Activated CD4-positive, alpha-beta memory T cell treated with anti-CD3 and anti-CD28 coated beads, Interleukin-2, amount 10 ng/mL, durations not matched to agents 7 days and 5 days (primary cell): ENCODE measurements at regions of chr1 and their contacts with region 1.

Region 1: GRCh38 chr1:151993654-151994496 is at the start of gene S100A10:
- DNase-seq: peak; percentile 86
- H3K4me3 Mint-ChIP-seq: peak within 1 kb of the TSS; percentile 91
- H3K27ac Mint-ChIP-seq: peak within 1 kb of the TSS; percentile 98
- H3K4me1 Mint-ChIP-seq: peaks cover 53% of the 10 kb centered on the region
- H3K27me3 Mint-ChIP-seq: no peaks in the 10 kb centered on the region
- total RNA-seq, gene S100A10: 631 to 641 TPM

Region 2: DNA sequence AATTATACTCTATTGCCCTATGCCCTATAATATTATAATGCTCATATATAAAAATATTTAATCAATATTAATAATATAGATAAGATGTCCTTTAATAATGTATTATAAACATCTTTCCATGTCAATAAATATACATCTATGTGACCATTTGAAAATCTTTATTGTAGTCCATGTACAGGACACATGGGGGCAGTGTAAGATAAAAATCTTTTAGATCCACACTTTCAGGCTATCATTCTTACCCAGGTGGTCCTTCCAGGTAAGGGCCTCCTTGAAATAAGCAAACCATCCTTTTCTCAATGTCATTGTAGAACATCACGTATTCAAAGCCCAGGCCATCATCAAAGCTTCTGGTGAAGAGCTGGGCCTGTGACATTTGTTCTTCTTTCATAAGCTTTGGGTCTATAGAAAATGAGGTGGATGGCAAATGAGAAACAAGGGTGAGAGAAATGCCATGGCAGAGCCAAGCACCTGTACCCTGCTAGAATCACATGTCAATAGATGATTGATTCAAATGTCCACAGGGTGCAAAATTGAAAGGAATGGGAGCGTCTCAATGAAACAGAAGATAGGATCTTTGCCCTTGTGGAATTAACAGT is 104.8 kb before region 1 on chr1:
- CTCF ChIA-PET with region 1: interaction called, 58 read pairs
- POLR2A ChIA-PET with region 1: no interaction called
- DNase-seq: no peak
- H3K4me3 Mint-ChIP-seq: no peak overlapping the region
- H3K27ac Mint-ChIP-seq: no peak overlapping the region
- H3K4me1 Mint-ChIP-seq: peaks cover 27% of the 10 kb centered on the region
- H3K27me3 Mint-ChIP-seq: no peaks in the 10 kb centered on the region

Region 3: DNA sequence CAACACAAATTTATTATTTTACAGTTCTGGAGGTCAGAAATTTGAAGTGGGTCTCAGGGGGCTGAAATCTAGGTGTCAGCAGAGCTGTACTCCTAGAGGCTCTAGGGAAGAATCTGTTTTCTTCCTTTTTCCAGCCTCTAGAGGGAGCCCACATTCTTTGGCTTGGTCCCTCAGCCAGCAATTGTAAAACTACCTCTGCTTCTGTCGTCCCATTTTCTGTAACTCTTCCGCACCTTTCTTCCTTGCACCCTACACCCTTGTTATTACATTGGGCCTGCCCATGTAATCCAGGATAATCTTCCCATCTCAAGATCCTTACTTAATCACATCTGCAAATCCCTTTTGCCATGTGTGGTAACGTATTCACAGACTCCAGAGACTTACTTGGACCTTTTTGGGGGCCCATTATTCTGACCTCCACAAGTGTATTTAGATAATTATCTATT is 59.8 kb before region 1 on chr1:
- CTCF ChIA-PET with region 1: interaction called, 181 read pairs
- POLR2A ChIA-PET with region 1: interaction called, 8 read pairs
- DNase-seq: peak; percentile 48
- H3K4me3 Mint-ChIP-seq: no peak overlapping the region
- H3K27ac Mint-ChIP-seq: no peak overlapping the region
- H3K4me1 Mint-ChIP-seq: peaks cover 2% of the 10 kb centered on the region
- H3K27me3 Mint-ChIP-seq: peaks cover 8% of the 10 kb centered on the region

Region 4: GRCh38 chr1:151939779-151940178 is 54.1 kb before region 1 on chr1:
- CTCF ChIA-PET with region 1: interaction called, 181 read pairs
- POLR2A ChIA-PET with region 1: interaction called, 8 read pairs
- DNase-seq: no peak
- H3K4me3 Mint-ChIP-seq: no peak overlapping the region
- H3K27ac Mint-ChIP-seq: no peak overlapping the region
- H3K4me1 Mint-ChIP-seq: peaks cover 20% of the 10 kb centered on the region
- H3K27me3 Mint-ChIP-seq: peaks cover 5% of the 10 kb centered on the region

Region 5: DNA sequence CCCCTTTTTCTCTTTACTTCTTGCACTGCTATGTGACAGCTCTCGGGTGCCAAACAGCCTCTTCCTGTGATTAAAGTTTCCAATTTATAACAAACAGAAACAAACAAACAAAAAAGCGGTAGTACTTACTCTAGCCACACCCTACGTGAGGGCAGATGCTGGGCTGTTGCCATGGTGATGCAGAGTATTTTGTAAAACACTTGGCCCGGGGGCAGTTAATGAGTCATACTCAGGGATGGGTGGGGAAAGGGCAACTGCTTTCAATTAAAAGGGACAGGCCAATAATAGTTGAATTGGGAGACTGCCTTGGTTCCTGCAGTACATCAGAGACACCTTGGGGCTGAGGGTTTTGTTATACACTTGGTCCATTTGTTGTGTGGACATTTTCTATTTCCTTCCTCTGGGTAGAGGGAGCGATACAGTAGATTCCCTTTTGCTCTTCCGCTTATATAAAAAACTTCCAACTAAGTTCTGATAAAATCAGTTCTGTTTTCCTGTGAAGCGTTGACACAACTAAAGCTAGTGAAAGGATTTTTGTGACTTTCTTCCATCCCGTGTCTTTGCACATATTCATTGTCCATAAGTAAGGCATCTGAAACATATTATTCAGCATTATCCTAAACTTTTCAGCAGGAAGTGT is 48.0 kb before region 1 on chr1:
- CTCF ChIA-PET with region 1: interaction called, 181 read pairs
- POLR2A ChIA-PET with region 1: interaction called, 5 read pairs
- DNase-seq: peak; percentile 90
- H3K4me3 Mint-ChIP-seq: peak overlapping the region; percentile 56
- H3K27ac Mint-ChIP-seq: peak overlapping the region; percentile 88
- H3K4me1 Mint-ChIP-seq: peaks cover 41% of the 10 kb centered on the region
- H3K27me3 Mint-ChIP-seq: no peaks in the 10 kb centered on the region

Region 6: GRCh38 chr1:152034646-152035405 is 41.0 kb after region 1 on chr1:
- CTCF ChIA-PET with region 1: interaction called, 5 read pairs
- POLR2A ChIA-PET with region 1: interaction called, 14 read pairs
- DNase-seq: peak; percentile 74
- H3K4me3 Mint-ChIP-seq: peak overlapping the region; percentile 95
- H3K27ac Mint-ChIP-seq: peak overlapping the region; percentile 95
- H3K4me1 Mint-ChIP-seq: peaks cover 52% of the 10 kb centered on the region
- H3K27me3 Mint-ChIP-seq: no peaks in the 10 kb centered on the region

Region 7: DNA sequence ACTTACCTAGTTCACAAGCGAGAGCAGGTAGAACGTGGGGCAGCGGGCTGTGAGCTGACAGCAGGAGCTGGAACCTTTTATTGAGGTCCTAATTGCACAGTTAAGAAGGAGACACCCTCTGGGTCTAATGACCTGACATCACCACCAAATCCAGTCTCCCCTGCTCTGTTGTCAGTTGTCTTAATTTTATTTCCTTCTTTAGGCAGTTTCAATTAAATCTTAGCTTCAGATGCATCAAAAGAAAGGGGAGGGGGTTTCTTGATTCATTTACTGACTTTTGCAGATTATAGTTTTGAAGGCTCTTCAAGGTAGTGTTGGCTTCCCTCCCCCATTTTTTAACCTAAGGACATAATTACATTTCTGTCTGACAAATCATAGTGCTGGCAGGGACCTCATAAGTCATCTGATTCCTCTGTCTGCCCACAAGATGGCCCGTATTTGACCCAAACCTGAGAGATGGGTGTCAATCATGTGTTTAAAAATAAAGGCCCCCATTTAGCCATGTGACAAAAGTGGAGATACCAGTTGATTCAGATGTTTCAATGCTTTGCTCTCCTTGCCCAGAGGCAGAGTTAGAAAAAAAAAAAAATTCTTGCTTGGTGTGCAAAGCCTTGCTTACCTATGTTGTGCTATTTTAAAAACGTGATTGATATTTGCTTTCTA is 95.3 kb after region 1 on chr1 and contains the start of gene TCHHL1:
- CTCF ChIA-PET with region 1: no interaction called
- POLR2A ChIA-PET with region 1: no interaction called
- DNase-seq: no peak
- H3K4me3 Mint-ChIP-seq: no peak within 1 kb of the TSS
- H3K27ac Mint-ChIP-seq: no peak within 1 kb of the TSS
- H3K4me1 Mint-ChIP-seq: no peaks in the 10 kb centered on the region
- H3K27me3 Mint-ChIP-seq: peaks cover 22% of the 10 kb centered on the region
- total RNA-seq, gene TCHHL1: not detected

Region 8: GRCh38 chr1:152141974-152142584 is 148.2 kb after region 1 on chr1:
- CTCF ChIA-PET with region 1: no interaction called
- POLR2A ChIA-PET with region 1: no interaction called
- DNase-seq: no peak
- H3K4me3 Mint-ChIP-seq: no peak overlapping the region
- H3K27ac Mint-ChIP-seq: no peak overlapping the region
- H3K4me1 Mint-ChIP-seq: peaks cover 6% of the 10 kb centered on the region
- H3K27me3 Mint-ChIP-seq: peaks cover 41% of the 10 kb centered on the region